Activated naive CD4-positive, alpha-beta T cell treated with anti-CD3 and anti-CD28 coated beads for 36 hours (primary cell): ENCODE measurements at regions of chr1 and their contacts with region 1.

Region 1: DNA sequence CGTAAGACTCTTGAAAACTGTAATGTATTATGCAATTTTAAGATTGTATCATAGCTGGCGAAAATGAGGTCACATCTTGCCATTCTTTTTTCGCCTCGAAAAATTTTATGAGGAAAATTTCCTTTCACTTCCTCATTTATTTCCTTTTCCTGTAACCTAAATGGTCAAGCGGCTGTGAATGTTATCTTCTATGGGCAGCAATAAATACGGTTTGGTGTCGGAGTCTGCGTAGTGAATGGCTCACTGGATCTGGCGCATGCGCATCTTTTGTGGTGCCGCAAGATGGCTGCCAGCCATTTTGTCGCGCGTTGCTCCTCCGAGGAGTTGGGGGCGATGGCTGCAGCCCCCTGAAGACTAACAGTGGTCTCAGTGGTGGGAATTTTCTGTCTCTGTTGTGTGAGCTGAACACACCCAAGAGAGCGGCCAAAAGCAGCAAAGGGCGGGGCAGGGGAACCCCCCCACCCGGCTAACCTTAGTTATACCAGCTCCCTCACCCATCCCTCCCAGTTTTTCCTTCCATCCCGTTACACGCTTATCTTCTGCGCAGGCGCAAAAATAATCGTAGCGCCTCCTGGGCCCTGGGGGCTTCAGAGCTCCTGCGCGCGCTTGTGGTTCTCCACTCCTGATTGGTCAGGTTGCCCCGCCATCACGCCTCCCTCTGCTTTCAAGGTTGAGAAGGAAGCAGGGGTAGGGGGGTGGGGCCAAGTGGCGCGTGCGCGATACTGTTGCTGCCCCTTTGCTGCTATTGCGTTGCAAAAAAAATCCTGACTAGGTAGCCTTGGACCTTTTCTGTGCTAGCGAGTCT is at the start of gene RPRD2:
- DNase-seq: peak; percentile 100
- H3K4me3 Mint-ChIP-seq: peak within 1 kb of the TSS; percentile 89
- H3K27ac Mint-ChIP-seq: peak within 1 kb of the TSS; percentile 98
- H3K4me1 Mint-ChIP-seq: peaks cover 17% of the 10 kb centered on the region
- H3K27me3 Mint-ChIP-seq: no peaks in the 10 kb centered on the region
- total RNA-seq, gene RPRD2: 20.9 to 22.9 TPM

Region 2: GRCh38 chr1:150268705-150269403 is 94.8 kb before region 1 on chr1 and contains the start of gene APH1A:
- CTCF ChIA-PET with region 1: no interaction called
- intact Hi-C with region 1: loop called (anchors 1 kb)
- DNase-seq: peak; percentile 98
- H3K4me3 Mint-ChIP-seq: peak within 1 kb of the TSS; percentile 89
- H3K27ac Mint-ChIP-seq: peak within 1 kb of the TSS; percentile 96
- H3K4me1 Mint-ChIP-seq: peaks cover 23% of the 10 kb centered on the region
- H3K27me3 Mint-ChIP-seq: no peaks in the 10 kb centered on the region
- total RNA-seq, gene APH1A: 71.2 to 75.7 TPM

Region 3: GRCh38 chr1:150429805-150430204 is 66.2 kb after region 1 on chr1:
- CTCF ChIA-PET with region 1: no interaction called
- intact Hi-C with region 1: loop called (anchors 1 kb)
- DNase-seq: no peak
- H3K4me3 Mint-ChIP-seq: no peak overlapping the region
- H3K27ac Mint-ChIP-seq: peak overlapping the region; percentile 42
- H3K4me1 Mint-ChIP-seq: peaks cover 11% of the 10 kb centered on the region
- H3K27me3 Mint-ChIP-seq: no peaks in the 10 kb centered on the region

Region 4: GRCh38 chr1:150629115-150629928 is 265.7 kb after region 1 on chr1 and contains the start of gene ENSA:
- CTCF ChIA-PET with region 1: no interaction called
- intact Hi-C with region 1: loop called (anchors 2 kb)
- DNase-seq: peak; percentile 98
- H3K4me3 Mint-ChIP-seq: no peak within 1 kb of the TSS
- H3K27ac Mint-ChIP-seq: peak within 1 kb of the TSS; percentile 54
- H3K4me1 Mint-ChIP-seq: peaks cover 42% of the 10 kb centered on the region
- H3K27me3 Mint-ChIP-seq: no peaks in the 10 kb centered on the region
- total RNA-seq, gene ENSA: 187 to 193 TPM

Region 5: DNA sequence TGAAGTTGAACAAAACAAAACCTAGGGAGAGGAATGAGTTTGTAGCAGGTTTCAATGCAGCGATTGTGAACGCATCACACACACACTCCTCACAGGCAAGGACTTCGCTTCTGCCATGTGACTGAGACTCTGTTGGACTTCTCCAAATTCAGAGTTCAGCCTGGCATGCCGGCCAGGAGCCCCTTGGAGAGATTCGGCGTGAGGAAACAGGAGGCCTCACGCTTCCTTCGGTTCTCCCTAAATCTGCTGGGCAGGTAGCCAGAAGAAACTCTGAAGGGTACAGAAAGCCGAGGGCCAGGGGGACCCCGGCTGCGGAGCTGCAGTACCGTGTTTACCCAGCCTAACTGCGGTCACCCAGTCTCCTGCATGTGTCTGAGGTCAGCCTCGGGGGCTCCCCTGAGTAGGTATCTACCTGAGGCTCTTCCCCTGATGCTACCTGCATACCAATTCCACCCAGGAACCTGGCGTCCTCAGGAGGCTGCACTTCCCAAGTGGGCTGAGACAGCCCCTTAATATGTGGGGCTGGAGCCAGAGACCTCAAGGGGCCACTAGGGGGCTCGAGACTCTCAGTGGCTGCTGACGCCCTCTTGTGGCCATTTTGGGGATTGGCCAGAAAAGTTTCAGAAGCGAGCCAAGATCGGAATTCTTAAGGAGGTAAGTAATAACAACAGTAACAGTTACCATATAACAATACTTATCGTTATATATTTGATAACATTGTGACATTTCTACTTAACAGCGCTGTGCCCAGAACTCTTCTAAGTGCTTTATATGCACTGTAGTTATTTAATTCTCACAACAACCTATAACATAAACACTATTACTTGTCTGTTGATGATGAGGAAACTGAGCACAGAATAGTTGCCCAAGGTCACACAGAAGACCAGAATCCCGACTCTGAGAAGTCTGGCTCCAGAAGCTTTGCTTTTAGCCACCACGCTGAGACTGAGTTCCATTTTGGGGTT is 615.7 kb after region 1 on chr1:
- CTCF ChIA-PET with region 1: no interaction called
- intact Hi-C with region 1: loop called (anchors 10 kb)
- DNase-seq: peak; percentile 94
- H3K4me3 Mint-ChIP-seq: peak overlapping the region; percentile 43
- H3K27ac Mint-ChIP-seq: peak overlapping the region; percentile 53
- H3K4me1 Mint-ChIP-seq: peaks cover 39% of the 10 kb centered on the region
- H3K27me3 Mint-ChIP-seq: no peaks in the 10 kb centered on the region